ENCODE measurements at regions of chr13 and their contacts with region 1.

Region 1: GRCh38 chr13:54124705-54125104 is 1096.1 kb downstream of the OLFM4 start:
- DNase-seq: no peak
- H3K4me3 ChIP-seq: no peak overlapping the region
- H3K27ac ChIP-seq: no peak overlapping the region
- H3K4me1 ChIP-seq: no peaks in the 10 kb centered on the region
- H3K27me3 ChIP-seq: no peaks in the 10 kb centered on the region
- CTCF ChIP-seq: no peak

Region 2: GRCh38 chr13:53285896-53286430 is 838.7 kb before region 1 on chr13:
- CTCF ChIA-PET with region 1: no interaction called
- dilution Hi-C with region 1: no loop called
- in situ Hi-C with region 1: no loop called
- intact Hi-C with region 1: no loop called
- DNase-seq: no peak
- H3K4me3 ChIP-seq: no peak overlapping the region
- H3K27ac ChIP-seq: no peak overlapping the region
- H3K4me1 ChIP-seq: no peaks in the 10 kb centered on the region
- H3K27me3 ChIP-seq: no peaks in the 10 kb centered on the region
- CTCF ChIP-seq: no peak

Region 3: GRCh38 chr13:55000043-55000442 is 875.3 kb after region 1 on chr13:
- CTCF ChIA-PET with region 1: interaction called, 10 read pairs
- dilution Hi-C with region 1: no loop called
- in situ Hi-C with region 1: no loop called
- intact Hi-C with region 1: no loop called
- DNase-seq: no peak
- H3K4me3 ChIP-seq: no peak overlapping the region
- H3K27ac ChIP-seq: no peak overlapping the region
- H3K4me1 ChIP-seq: no peaks in the 10 kb centered on the region
- H3K27me3 ChIP-seq: no peaks in the 10 kb centered on the region
- CTCF ChIP-seq: no peak